Activated CD4-positive, alpha-beta T cell treated with anti-CD3 and anti-CD28 coated beads, Interleukin-2, amount 10 ng/mL, durations not matched to agents 7 days and 5 days (primary cell): ENCODE measurements at regions of chr19 and their contacts with region 1.

Region 1: DNA sequence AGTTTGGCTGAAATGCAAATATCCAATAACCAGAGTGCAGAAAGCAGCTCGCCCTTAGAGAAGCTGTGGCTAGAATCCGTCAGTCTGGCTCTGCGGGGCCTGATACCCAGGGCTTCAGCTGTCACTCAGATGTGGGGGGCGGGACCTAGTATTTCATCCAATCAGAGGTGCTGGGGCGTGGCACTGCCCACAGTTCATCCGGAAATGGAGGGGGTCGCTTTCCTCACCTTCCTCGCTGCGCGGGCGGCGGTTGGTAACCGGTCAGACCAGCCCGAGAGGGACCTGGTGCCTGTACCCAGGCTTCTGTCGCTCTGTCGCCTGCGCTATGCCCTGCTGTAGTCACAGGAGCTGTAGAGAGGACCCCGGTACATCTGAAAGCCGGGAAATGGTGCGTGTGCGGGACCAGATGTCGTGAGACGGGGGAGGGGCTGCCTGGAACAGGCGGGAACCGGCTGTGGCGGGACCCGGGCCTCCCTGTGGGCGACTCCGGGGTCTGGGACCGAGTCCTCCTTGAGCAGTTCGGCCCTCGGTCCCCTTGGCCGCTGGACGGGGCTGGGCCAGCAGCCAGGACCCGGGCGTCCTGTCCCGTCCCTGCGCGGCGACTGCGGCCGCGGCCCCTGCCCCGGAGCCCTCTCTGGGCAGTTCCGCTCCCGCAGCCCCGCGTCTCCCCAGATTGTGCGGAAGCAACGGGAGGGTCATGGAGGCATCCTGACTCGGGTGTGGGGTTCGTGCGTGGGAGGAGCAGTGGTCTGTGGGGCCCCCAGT is at the start of gene ZNF700:
- DNase-seq: peak; percentile 96
- H3K4me3 Mint-ChIP-seq: peak within 1 kb of the TSS; percentile 97
- H3K27ac Mint-ChIP-seq: peak within 1 kb of the TSS; percentile 99
- H3K4me1 Mint-ChIP-seq: peaks cover 36% of the 10 kb centered on the region
- H3K27me3 Mint-ChIP-seq: no peaks in the 10 kb centered on the region
- total RNA-seq, gene ZNF700: 21.2 to 22.1 TPM

Region 2: GRCh38 chr19:11987405-11988281 is 62.6 kb after region 1 on chr19:
- CTCF ChIA-PET with region 1: interaction called, 42 read pairs
- POLR2A ChIA-PET with region 1: interaction called, 5 read pairs
- DNase-seq: peak; percentile 96
- H3K4me3 Mint-ChIP-seq: peak overlapping the region; percentile 98
- H3K27ac Mint-ChIP-seq: peak overlapping the region; percentile 98
- H3K4me1 Mint-ChIP-seq: peaks cover 22% of the 10 kb centered on the region
- H3K27me3 Mint-ChIP-seq: no peaks in the 10 kb centered on the region

Region 3: DNA sequence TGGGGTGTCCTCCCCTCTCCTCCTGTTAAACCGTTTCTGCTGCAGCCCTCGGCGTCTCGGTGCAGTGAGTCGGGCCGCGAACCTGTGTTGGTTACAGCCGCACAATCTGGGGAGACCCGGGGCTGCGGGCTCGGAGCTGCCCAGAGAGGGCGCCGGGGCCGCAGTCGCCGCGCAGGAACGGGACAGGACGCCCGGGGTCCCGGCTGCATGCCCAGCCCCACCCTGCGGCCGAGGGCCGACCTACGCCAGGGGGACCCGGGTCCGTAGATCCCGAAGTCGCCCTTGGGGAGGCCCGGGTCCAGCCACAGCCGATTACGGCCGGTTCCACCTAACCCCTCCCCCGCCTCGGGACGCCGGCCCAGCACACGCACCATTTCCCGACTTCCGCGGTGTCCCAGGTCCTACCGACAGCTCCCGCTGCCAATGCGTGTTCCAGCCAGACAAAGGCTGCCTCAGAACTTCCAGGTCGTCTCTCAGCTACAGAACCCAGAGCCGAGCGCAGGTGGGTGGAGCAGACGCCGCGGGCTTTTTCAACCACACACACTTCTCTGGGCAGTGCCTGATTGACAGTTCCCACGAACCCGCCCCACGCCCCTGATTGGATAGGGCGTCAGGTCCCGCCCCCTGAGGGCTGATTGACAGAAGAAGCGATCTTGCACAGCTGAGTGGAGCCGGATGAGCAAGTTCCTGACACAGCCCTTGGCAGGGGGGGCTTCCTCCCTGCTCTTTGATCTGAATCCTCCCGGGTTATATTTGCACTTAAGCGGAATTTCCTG is 515.7 kb after region 1 on chr19 and contains the start of gene ZNF443:
- CTCF ChIA-PET with region 1: no interaction called
- POLR2A ChIA-PET with region 1: interaction called, 20 read pairs
- DNase-seq: peak; percentile 99
- H3K4me3 Mint-ChIP-seq: peak within 1 kb of the TSS; percentile 93
- H3K27ac Mint-ChIP-seq: peak within 1 kb of the TSS; percentile 93
- H3K4me1 Mint-ChIP-seq: peaks cover 17% of the 10 kb centered on the region
- H3K27me3 Mint-ChIP-seq: no peaks in the 10 kb centered on the region
- total RNA-seq, gene ZNF443: 5.8 to 6.4 TPM